AG04449 (cell line): ENCODE measurements at regions of chr17 and their contacts with region 1.

Region 1: GRCh38 chr17:72985881-72986720 is 106.4 kb downstream of the SLC39A11 start:
- DNase-seq: no peak
- H3K4me3 ChIP-seq: no peak overlapping the region
- CTCF ChIP-seq: peak; percentile 91

Region 2: DNA sequence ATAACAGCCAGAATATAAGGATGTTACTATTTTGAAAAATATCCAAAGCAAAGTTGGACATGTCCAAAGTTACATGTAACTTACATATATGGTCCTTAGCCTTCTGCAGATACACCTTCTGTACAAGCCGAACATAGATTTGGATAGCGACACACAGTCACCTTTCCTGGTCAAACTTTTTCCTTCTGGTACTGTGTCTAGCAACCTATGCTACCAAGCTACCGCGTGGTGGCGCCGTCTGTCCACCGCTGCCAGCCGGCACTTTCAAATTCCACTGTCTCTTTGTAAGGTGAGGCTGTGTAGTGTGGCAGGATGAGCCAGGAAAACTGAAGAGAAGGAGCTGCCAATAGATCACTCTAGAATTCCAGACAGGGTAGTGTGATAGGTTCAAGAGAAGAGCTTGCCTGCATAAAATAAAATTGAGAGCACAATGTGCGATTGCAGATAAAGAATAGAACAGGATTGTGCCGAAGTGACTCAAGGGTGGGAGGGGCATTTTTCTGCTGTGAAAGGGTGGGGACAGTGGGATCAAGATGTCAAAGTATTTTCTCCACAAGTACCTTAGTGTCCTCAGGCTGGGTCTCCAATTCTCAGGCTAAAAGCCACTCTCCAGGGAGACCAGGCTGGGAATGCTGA is 260.6 kb before region 1 on chr17:
- CTCF ChIA-PET with region 1: interaction called, 80 read pairs
- POLR2A ChIA-PET with region 1: no interaction called
- DNase-seq: no peak
- H3K4me3 ChIP-seq: no peak overlapping the region
- CTCF ChIP-seq: peak; percentile 90

Region 3: GRCh38 chr17:72872396-72872795 is 113.7 kb before region 1 on chr17:
- CTCF ChIA-PET with region 1: no interaction called
- POLR2A ChIA-PET with region 1: no interaction called
- DNase-seq: no peak
- H3K4me3 ChIP-seq: no peak overlapping the region
- CTCF ChIP-seq: no peak

Region 4: GRCh38 chr17:72901083-72901482 is 85.0 kb before region 1 on chr17:
- CTCF ChIA-PET with region 1: no interaction called
- POLR2A ChIA-PET with region 1: no interaction called
- DNase-seq: no peak
- H3K4me3 ChIP-seq: no peak overlapping the region
- CTCF ChIP-seq: no peak

Region 5: GRCh38 chr17:72967977-72968585 is 18.0 kb before region 1 on chr17:
- CTCF ChIA-PET with region 1: interaction called, 10 read pairs
- POLR2A ChIA-PET with region 1: no interaction called
- DNase-seq: no peak
- H3K4me3 ChIP-seq: no peak overlapping the region
- CTCF ChIP-seq: no peak

Region 6: DNA sequence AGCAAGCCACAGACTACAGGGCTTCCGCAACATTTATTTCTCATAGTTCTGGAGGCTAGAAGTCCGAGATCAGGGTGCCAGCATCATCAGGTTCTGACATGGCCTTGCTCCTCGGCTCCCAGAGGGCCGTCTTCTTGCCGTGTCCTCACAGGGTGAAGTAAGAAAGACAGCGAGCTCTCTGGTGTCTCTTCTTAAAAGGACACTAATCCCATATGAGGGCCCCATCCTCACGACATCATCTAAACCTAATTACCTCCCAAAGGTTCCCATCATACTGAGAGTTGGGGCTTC is 18.1 kb after region 1 on chr17:
- CTCF ChIA-PET with region 1: interaction called, 31 read pairs
- POLR2A ChIA-PET with region 1: no interaction called
- DNase-seq: no peak
- H3K4me3 ChIP-seq: no peak overlapping the region
- CTCF ChIP-seq: no peak

Region 7: GRCh38 chr17:73043686-73044581 is 57.8 kb after region 1 on chr17:
- CTCF ChIA-PET with region 1: interaction called, 12 read pairs
- POLR2A ChIA-PET with region 1: no interaction called
- DNase-seq: peak; percentile 66
- H3K4me3 ChIP-seq: no peak overlapping the region
- CTCF ChIP-seq: no peak

Region 8: GRCh38 chr17:73156166-73156840 is 170.2 kb after region 1 on chr17:
- CTCF ChIA-PET with region 1: interaction called, 48 read pairs
- POLR2A ChIA-PET with region 1: no interaction called
- DNase-seq: no peak
- H3K4me3 ChIP-seq: no peak overlapping the region
- CTCF ChIP-seq: peak; percentile 80